ENCODE measurements at regions of chr2 and their contacts with region 1.

Region 1: DNA sequence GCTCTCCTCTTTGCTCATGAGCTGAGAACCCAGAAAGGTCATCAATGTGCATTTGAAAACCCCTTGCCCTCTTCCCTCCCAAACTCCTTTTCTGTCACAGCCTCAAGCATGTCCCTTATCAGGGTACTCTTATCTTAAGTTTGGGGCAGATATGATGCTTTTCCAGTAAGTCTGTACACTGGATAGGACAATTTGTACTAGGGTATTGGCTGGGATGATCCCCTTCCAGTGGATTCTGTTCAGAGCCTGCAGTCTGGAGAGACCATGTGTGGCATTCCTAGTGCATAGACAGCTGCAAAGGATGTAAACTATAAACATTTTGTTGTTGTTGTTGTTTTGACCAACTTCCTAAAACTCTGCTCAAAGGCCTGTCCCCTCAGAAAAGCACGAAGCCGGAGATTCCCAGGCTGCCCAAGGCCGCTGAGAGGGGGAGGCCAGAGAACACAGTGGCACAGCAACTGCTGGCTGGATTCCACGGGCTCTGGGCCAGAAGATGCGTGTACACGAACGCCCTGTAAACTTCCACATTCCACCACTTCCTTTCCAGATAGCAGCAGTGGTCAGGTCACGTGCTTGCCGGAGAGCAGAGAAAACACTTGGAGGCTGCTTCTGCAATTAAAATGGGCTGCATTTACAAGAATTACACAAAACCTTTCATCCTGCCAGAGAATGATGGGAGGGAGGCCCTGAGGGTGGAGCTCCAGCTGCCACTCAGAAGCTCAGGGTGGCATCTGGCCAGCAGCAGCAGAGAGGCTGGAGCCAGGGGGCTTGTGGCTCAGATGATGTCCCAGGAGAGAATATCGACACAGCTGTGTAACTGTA is 42.1 kb downstream of the BMP10 start:
- DNase-seq: peak; percentile 17 to 87 (median 73)
- ATAC-seq: peak; percentile 61
- H3K4me3 ChIP-seq: no peak overlapping the region
- H3K4me3 Mint-ChIP-seq: peak overlapping the region; percentile 53
- H3K27ac ChIP-seq: peak overlapping the region; percentile 26 to 70
- H3K27ac Mint-ChIP-seq: peak overlapping the region; percentile 92
- H3K4me1 ChIP-seq: peaks cover 51% of the 10 kb centered on the region
- H3K4me1 Mint-ChIP-seq: peaks cover 67% of the 10 kb centered on the region
- H3K27me3 ChIP-seq: no peaks in the 10 kb centered on the region
- H3K27me3 Mint-ChIP-seq: no peaks in the 10 kb centered on the region
- CTCF ChIP-seq: no peak

Region 2: GRCh38 chr2:68807821-68808266 is 21.3 kb before region 1 on chr2:
- CTCF ChIA-PET with region 1: no interaction called
- POLR2A ChIA-PET with region 1: no interaction called
- intact Hi-C with region 1: loop called in 1 of 2 experiments (anchors 2 kb)
- DNase-seq: peak in 3 of 9 experiments; percentile 22 to 63 (median 57)
- ATAC-seq: peak; percentile 49
- H3K4me3 ChIP-seq: no peak overlapping the region
- H3K4me3 Mint-ChIP-seq: no peak overlapping the region
- H3K27ac ChIP-seq: peak overlapping the region in 1 of 2 experiments; percentile 39
- H3K27ac Mint-ChIP-seq: peak overlapping the region; percentile 87
- H3K4me1 ChIP-seq: peaks cover 28% of the 10 kb centered on the region
- H3K4me1 Mint-ChIP-seq: peaks cover 59% of the 10 kb centered on the region
- H3K27me3 ChIP-seq: no peaks in the 10 kb centered on the region
- H3K27me3 Mint-ChIP-seq: no peaks in the 10 kb centered on the region
- CTCF ChIP-seq: no peak

Region 3: GRCh38 chr2:68901199-68901960 is 72.3 kb after region 1 on chr2:
- CTCF ChIA-PET with region 1: no interaction called
- POLR2A ChIA-PET with region 1: no interaction called
- intact Hi-C with region 1: loop called in 1 of 2 experiments (anchors 1 kb)
- DNase-seq: no peak
- ATAC-seq: no peak
- H3K4me3 ChIP-seq: no peak overlapping the region
- H3K4me3 Mint-ChIP-seq: no peak overlapping the region
- H3K27ac ChIP-seq: no peak overlapping the region
- H3K27ac Mint-ChIP-seq: no peak overlapping the region
- H3K4me1 ChIP-seq: no peaks in the 10 kb centered on the region
- H3K4me1 Mint-ChIP-seq: no peaks in the 10 kb centered on the region
- H3K27me3 ChIP-seq: peaks cover 0 to 2% of the 10 kb centered on the region in 2 experiments
- H3K27me3 Mint-ChIP-seq: peaks cover 1% of the 10 kb centered on the region
- CTCF ChIP-seq: no peak

Measured in CD8-positive, alpha-beta T cell (primary cell).